MCF 10A (cell line): ENCODE measurements at regions of chr12 and their contacts with region 1.

Region 1: DNA sequence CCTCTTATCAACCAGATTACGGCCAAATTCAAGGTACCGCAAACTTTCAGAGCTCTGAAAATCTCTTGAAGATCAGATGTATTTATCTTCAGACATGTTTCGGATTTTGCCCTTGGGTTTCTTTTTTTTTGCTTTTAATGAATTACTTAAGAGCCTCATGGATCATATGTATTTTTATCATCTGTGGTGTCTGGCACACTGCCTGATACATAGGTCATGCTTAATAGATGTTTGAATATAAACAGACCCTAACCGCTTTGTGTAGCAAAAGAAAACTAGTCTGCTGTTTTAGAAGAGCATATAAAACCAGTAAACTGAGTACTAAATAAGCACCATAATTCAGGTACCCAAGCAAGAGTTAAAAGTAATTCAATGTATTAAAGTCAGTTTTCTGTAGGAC is 20.1 kb upstream of the TBK1 start:
- DNase-seq: no peak
- H3K4me3 Mint-ChIP-seq: no peak overlapping the region
- H3K27ac Mint-ChIP-seq: no peak overlapping the region
- H3K4me1 Mint-ChIP-seq: no peaks in the 10 kb centered on the region
- H3K27me3 Mint-ChIP-seq: no peaks in the 10 kb centered on the region
- CTCF ChIP-seq: no peak

Region 2: GRCh38 chr12:64352181-64352580 is 79.6 kb before region 1 on chr12:
- CTCF ChIA-PET with region 1: no interaction called
- POLR2A ChIA-PET with region 1: no interaction called
- intact Hi-C with region 1: no loop called
- DNase-seq: no peak
- H3K4me3 Mint-ChIP-seq: no peak overlapping the region
- H3K27ac Mint-ChIP-seq: no peak overlapping the region
- H3K4me1 Mint-ChIP-seq: no peaks in the 10 kb centered on the region
- H3K27me3 Mint-ChIP-seq: no peaks in the 10 kb centered on the region
- CTCF ChIP-seq: no peak

Region 3: GRCh38 chr12:64373193-64373592 is 58.6 kb before region 1 on chr12:
- CTCF ChIA-PET with region 1: no interaction called
- POLR2A ChIA-PET with region 1: no interaction called
- intact Hi-C with region 1: no loop called
- DNase-seq: peak; percentile 18
- H3K4me3 Mint-ChIP-seq: no peak overlapping the region
- H3K27ac Mint-ChIP-seq: no peak overlapping the region
- H3K4me1 Mint-ChIP-seq: peaks cover 8% of the 10 kb centered on the region
- H3K27me3 Mint-ChIP-seq: no peaks in the 10 kb centered on the region
- CTCF ChIP-seq: no peak

Region 4: GRCh38 chr12:64451687-64452558 is 20.1 kb after region 1 on chr12 and contains the start of gene TBK1:
- CTCF ChIA-PET with region 1: no interaction called
- POLR2A ChIA-PET with region 1: interaction called, 10 read pairs
- intact Hi-C with region 1: no loop called
- DNase-seq: peak; percentile 81
- H3K4me3 Mint-ChIP-seq: peak within 1 kb of the TSS; percentile 84
- H3K27ac Mint-ChIP-seq: peak within 1 kb of the TSS; percentile 96
- H3K4me1 Mint-ChIP-seq: no peaks in the 10 kb centered on the region
- H3K27me3 Mint-ChIP-seq: no peaks in the 10 kb centered on the region
- CTCF ChIP-seq: no peak
- total RNA-seq, gene TBK1: 19.6 and 23.0 TPM in 2 replicates

Region 5: GRCh38 chr12:64840949-64841717 is 409.3 kb after region 1 on chr12:
- CTCF ChIA-PET with region 1: no interaction called
- POLR2A ChIA-PET with region 1: no interaction called
- intact Hi-C with region 1: no loop called
- DNase-seq: no peak
- H3K4me3 Mint-ChIP-seq: no peak overlapping the region
- H3K27ac Mint-ChIP-seq: no peak overlapping the region
- H3K4me1 Mint-ChIP-seq: no peaks in the 10 kb centered on the region
- H3K27me3 Mint-ChIP-seq: no peaks in the 10 kb centered on the region
- CTCF ChIP-seq: no peak